Dendritic cell treated with granulocyte-macrophage colony-stimulating factor and Interleukin-4, amounts not matched to agents 40 ng/mL and 50 ng/mL, for 4 days (primary cell): ENCODE measurements at regions of chr15 and their contacts with region 1.

Region 1: DNA sequence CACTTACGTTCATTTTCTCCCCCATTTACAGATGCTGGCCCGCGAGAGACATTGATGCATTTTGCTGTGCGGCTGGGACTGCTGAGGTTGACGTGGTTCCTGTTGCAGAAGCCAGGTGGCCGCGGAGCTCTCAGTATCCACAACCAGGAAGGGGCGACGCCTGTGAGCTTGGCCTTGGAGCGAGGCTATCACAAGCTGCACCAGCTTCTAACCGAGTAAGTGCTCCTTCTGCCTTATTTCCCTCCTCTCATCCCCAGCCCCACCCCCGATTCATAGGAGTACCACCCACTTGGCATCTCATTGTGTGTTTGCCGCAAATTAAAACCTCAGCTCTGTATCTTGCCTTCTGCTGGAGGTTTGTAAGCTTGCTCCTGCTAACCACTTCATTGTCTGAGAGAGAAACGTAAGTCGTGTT is 163.3 kb downstream of the AKAP13 start:
- H3K4me3 Mint-ChIP-seq: peak overlapping the region; percentile 52
- H3K27ac Mint-ChIP-seq: peak overlapping the region; percentile 86
- H3K4me1 Mint-ChIP-seq: peaks cover 86% of the 10 kb centered on the region
- H3K27me3 Mint-ChIP-seq: no peaks in the 10 kb centered on the region

Region 2: DNA sequence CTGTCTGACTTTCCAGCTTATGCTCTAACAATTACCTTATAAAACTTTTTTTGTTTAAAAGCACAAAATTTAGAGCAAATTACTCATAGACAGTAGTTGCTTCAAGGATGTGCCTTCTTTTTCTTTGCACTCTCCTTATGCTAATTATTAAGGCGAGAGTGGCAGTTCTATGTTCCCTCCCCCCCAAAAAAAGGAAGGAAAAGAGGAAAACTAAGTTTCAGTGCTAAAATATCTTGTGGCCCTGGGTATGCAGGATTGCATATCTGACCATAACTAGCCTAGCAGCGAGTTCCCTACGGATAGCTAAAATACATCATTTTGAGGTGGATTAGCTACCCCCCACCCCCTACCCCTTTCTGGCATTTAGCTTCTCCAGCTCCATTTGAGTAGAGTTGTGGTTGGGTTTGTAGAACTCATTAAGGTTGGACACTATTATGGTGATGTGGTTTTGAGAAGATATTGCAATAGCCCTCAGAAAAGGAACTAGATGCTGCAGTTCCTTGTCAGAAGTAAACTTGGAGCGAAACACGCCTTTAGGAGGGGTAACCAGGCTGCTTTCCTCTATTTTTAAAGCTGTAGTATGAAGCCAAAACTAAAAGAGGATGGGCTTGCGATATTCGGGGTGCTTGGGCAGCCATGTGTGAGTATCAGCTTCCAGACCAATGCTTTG is 11.2 kb after region 1 on chr15:
- intact Hi-C with region 1: loop called (anchors 2 kb)
- H3K4me3 Mint-ChIP-seq: peak overlapping the region; percentile 46
- H3K27ac Mint-ChIP-seq: peak overlapping the region; percentile 78
- H3K4me1 Mint-ChIP-seq: peaks cover 45% of the 10 kb centered on the region
- H3K27me3 Mint-ChIP-seq: no peaks in the 10 kb centered on the region